ENCODE measurements at regions of chr1 and their contacts with region 1.

Region 1: GRCh38 chr1:230215031-230215430 is 148.0 kb downstream of the GALNT2 start:
- DNase-seq: no peak
- H3K4me3 ChIP-seq: no peak overlapping the region
- H3K27ac ChIP-seq: no peak overlapping the region
- H3K4me1 ChIP-seq: peaks cover 27% of the 10 kb centered on the region
- CTCF ChIP-seq: 0 out of 2 replicates have a peak, but pooled peaks have one; percentile 9

Region 2: GRCh38 chr1:230186003-230186863 is 28.8 kb before region 1 on chr1:
- CTCF ChIA-PET with region 1: no interaction called
- POLR2A ChIA-PET with region 1: no interaction called
- intact Hi-C with region 1: no loop called
- DNase-seq: no peak
- H3K4me3 ChIP-seq: no peak overlapping the region
- H3K27ac ChIP-seq: no peak overlapping the region
- H3K4me1 ChIP-seq: no peaks in the 10 kb centered on the region
- CTCF ChIP-seq: no peak

Region 3: DNA sequence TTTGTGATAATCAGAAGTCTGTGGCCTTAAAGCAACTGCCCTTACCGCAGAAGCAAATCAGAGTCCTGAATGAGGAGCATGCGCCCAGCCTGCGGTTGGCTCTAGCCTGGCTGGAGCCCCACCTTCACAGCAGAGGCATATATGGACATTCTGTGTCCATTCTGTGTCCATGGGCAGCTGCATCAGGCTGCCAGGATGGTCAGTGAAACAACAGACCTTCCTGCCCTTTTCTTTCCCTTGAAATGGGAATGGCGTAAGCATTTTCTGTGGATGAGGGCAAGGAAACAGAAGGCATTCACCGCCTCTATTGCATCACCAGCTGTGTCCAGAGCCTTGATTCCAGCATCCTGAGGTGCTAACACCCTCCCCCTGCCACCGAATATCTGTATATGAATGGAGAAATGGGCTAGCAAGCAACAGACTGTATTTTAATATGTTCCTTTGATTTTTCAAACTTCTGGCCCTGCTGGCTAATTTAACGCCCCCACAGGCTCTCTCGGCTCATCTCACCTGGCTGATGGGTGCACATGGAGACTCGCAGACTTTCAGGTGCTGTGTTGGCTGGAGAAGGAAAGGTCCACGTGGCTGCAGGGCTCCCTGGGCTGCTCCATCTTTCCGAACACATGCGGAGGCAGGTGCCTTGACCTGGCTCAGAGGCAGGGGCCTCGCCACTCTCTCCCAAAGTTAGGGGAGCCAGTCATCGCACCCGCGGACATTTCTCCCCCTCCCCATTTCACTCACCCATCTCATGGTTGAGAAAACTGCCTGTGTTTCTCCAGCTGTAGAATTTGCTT is 11.2 kb after region 1 on chr1:
- CTCF ChIA-PET with region 1: no interaction called
- POLR2A ChIA-PET with region 1: interaction called, 15 read pairs
- intact Hi-C with region 1: no loop called
- DNase-seq: no peak
- H3K4me3 ChIP-seq: no peak overlapping the region
- H3K27ac ChIP-seq: no peak overlapping the region
- H3K4me1 ChIP-seq: no peaks in the 10 kb centered on the region
- CTCF ChIP-seq: no peak